Psoas muscle (tissue), 8 donors: ENCODE measurements at regions of chr5 and their contacts with region 1.

Region 1: DNA sequence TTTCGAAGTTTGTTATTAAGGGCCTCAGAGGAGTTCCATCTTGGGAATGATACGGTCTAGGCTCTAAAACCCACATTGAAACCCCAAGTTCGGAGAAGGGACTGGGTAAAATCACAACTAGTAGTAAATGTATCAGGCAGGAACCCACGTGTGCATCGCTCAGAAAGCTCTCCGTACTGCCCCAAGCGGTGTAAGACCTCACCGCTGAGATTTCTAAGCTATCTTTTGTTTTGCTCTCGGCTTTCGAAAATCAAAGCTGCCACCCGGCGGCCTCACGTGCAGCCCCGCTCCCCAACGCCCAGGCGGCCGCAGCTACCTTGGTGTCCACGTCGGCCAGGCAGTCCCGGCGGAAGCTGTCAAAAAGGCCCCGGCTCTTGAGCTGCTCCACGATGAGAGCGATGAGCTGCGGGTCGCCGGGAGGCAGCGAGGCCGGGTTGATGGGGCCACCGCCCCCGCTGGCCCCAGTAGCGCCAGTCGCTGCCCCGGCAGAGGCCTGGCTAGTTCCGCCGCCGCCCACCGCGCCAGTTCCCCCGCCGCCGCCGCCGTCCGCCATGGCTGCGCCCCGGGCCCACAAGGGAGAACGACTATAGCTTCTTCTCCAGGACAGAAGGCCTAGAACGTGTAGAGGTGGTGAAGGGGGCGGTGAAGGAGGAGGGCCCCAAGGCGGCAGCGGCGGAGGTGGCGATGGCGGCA is 420 bp downstream of the BOD1 start:
- DNase-seq: peak; percentile 49 to 81
- ATAC-seq: peak; percentile 72 to 78 (median 74)
- H3K4me3 ChIP-seq: peak overlapping the region; percentile 88
- H3K27ac ChIP-seq: peak overlapping the region; percentile 97
- H3K4me1 ChIP-seq: peaks cover 53% of the 10 kb centered on the region
- H3K27me3 ChIP-seq: no peaks in the 10 kb centered on the region
- CTCF ChIP-seq: peak; percentile 69

Region 2: GRCh38 chr5:173753307-173754168 is 137.5 kb after region 1 on chr5:
- intact Hi-C with region 1: loop called in 1 of 2 experiments (anchors 2 kb)
- DNase-seq: peak; percentile 84 to 95
- ATAC-seq: peak; percentile 94 to 96 (median 95)
- H3K4me3 ChIP-seq: peak overlapping the region; percentile 41
- H3K27ac ChIP-seq: peak overlapping the region; percentile 92
- H3K4me1 ChIP-seq: peaks cover 34% of the 10 kb centered on the region
- H3K27me3 ChIP-seq: no peaks in the 10 kb centered on the region
- CTCF ChIP-seq: no peak

Region 3: DNA sequence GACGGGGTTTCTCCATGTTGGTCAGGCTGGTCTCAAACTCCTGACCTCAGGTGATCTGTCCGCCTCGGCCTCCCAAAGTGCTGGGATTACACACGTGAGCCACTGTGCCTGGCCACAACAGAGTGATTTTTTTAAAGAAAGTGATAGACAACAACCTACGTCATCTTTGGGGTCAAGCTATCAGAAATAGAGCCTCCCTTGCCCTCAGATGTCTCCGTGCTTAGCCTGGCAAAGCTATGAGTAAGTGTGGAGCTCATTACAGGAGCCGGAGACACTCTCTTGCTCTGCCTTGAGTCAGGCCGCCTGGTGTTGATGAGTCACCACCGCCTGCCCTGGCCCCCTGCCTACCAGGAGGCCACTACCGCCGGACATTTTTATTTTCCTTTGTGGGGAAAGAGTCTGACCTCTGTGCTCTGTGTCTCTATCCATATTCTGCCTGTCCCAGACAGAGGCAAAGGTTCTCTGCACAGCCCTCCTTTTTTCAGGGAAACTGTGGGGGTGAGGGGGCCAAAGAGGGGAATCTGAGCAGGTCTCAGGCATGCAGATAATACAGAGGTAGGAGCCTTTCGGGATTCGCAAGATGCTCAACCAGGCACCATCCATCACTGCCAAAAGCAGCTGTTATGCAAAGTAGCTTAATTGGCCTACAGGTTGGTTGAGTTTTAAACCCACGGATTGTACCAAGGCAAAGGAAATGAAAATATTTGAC is 148.4 kb after region 1 on chr5:
- intact Hi-C with region 1: loop called in 1 of 2 experiments (anchors 5 kb)
- DNase-seq: peak; percentile 88 to 95
- ATAC-seq: peak; percentile 74 to 81 (median 79)
- H3K4me3 ChIP-seq: no peak overlapping the region
- H3K27ac ChIP-seq: peak overlapping the region; percentile 86
- H3K4me1 ChIP-seq: peaks cover 45% of the 10 kb centered on the region
- H3K27me3 ChIP-seq: no peaks in the 10 kb centered on the region
- CTCF ChIP-seq: no peak

Region 4: DNA sequence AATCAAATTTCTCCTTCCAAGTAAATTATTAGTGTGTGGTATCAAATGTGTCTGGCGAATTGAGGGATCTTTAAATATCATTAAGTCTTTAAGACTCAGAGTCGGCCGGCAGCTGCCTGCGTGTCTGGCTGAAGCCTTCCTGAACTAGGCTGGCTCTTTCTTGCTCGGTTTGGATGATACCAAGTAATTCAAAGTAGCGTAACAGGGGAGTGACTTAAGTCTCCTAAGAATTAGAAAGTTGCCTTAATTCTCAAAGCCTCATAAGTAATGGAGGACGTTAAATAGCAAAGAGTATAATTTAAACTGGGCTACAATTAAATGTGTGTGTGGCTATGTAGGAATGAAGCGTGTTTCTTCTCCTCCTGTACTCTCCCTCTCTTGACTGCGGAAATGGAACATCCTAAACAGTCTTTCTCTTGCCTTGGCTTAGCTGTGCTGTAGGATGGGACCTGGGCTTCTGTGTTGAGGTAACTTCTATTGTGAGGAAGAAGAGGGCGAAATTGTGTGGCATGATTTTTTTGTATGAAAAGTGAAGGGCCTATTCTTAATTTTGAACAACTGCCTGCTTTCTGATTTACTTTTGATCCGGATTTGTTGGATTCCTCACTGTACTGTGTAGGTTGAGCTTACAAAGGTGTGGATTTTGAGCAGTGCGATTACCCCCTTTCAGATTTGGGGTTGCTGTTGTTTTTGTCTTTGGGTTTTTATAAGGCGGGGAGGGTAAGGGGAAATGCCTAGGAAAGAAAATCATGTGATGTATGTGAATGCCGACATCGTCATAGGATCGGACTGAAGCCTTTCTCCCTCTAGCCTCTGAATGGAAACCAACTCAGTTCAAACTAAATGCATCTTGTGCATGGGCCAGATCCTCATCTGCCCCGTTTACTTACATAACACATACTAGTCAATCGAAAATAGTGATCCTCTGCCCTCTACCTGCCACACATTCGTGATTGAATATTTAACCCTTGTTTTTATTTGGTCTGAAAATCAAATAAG is 302.1 kb after region 1 on chr5:
- intact Hi-C with region 1: loop called in 1 of 2 experiments (anchors 5 kb)
- DNase-seq: peak; percentile 35 to 66
- ATAC-seq: peak; percentile 78 to 80 (median 79)
- H3K4me3 ChIP-seq: peak overlapping the region; percentile 71
- H3K27ac ChIP-seq: peak overlapping the region; percentile 94
- H3K4me1 ChIP-seq: peaks cover 74% of the 10 kb centered on the region
- H3K27me3 ChIP-seq: no peaks in the 10 kb centered on the region
- CTCF ChIP-seq: no peak

Region 5: GRCh38 chr5:174317259-174317894 is 701.3 kb after region 1 on chr5:
- intact Hi-C with region 1: loop called (anchors 2 to 5 kb)
- DNase-seq: peak in 1 of 2 donors; percentile 61
- ATAC-seq: peak; percentile 83 to 86 (median 84)
- H3K4me3 ChIP-seq: no peak overlapping the region
- H3K27ac ChIP-seq: no peak overlapping the region
- H3K4me1 ChIP-seq: no peaks in the 10 kb centered on the region
- H3K27me3 ChIP-seq: peaks cover 0 to 16% (median 0%) of the 10 kb centered on the region in 3 donors
- CTCF ChIP-seq: peak; percentile 68